Aorta (tissue), 5 donors: ENCODE measurements at regions of chr6 and their contacts with region 1.

Region 1: DNA sequence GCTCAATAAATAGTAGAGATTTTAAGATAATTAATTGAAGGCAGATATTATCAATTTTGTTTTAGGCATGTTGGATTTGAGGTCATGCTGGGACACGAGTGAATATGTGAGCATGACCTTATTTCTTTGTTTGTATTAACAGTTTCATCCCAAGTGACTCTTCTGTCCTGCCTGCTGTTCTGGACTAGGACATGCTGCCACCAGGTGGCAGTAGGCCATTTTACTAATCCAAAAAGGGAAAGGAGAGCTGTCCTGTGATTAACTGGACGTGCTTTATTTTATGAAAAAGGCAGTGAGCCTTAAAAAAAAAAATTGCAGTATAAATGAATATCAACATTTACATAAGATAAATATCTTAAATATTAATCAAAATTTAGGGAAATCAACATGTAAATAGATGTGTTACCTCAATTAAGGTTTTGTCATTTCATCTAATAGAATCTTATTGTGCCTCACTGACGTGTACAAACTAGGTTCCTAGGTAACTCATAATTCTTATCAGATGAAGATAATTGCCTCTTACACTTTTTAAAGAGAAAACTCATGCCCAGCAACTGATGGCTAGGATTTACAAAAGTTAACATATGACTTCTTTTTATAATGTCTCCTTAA is 49.8 kb downstream of the FRK start:
- DNase-seq: peak; percentile 79 to 85
- ATAC-seq: peak; percentile 81
- H3K4me3 ChIP-seq: no peak overlapping the region
- H3K27ac ChIP-seq: no peak overlapping the region
- H3K4me1 ChIP-seq: peaks cover 2 to 17% of the 10 kb centered on the region in 2 donors
- H3K27me3 ChIP-seq: no peaks in the 10 kb centered on the region

Region 2: GRCh38 chr6:115932481-115932880 is 78.4 kb before region 1 on chr6:
- intact Hi-C with region 1: loop called in 1 of 2 experiments (anchors 5 kb)
- DNase-seq: no peak
- ATAC-seq: no peak
- H3K4me3 ChIP-seq: no peak overlapping the region
- H3K27ac ChIP-seq: peak overlapping the region; percentile 88 to 99
- H3K4me1 ChIP-seq: peaks cover 0 to 3% of the 10 kb centered on the region in 2 donors
- H3K27me3 ChIP-seq: no peaks in the 10 kb centered on the region

Region 3: DNA sequence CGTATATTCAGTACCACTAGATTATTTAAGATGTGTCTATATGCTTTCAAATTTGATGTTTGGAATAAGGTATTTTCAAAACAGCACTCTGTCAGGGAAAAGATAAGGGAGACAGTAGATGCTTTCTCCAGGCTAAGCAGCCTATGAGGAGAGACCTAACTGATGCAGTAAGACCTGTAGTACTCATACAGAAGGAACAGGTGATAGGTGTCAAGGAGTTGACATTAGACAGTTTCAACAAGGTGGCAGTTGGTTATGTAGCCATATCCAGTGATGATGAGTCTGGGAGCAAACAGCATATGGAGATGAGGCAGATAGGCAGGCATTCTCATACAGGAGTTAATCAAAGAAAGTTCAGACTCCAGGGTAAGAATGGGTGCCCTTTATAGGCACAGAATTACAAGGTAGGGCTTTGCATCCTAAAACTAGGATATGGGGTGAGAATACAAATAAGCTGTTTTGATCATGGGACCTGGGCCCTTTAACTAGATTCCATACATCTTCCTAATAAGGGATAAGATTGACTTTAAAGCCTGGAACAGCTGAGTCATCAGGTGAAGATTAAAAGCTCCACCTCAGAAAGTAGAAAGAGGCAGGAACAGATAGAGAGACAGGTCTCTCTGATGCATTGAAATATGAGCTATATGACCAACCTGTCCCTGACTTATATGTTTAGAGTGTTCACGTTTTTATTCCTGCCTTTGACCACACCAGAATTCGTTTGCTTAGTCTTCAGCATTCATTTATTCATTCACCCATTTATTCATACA is 613.3 kb after region 1 on chr6:
- intact Hi-C with region 1: no loop called
- DNase-seq: no peak
- ATAC-seq: no peak
- H3K4me3 ChIP-seq: no peak overlapping the region
- H3K27ac ChIP-seq: no peak overlapping the region
- H3K4me1 ChIP-seq: no peaks in the 10 kb centered on the region
- H3K27me3 ChIP-seq: no peaks in the 10 kb centered on the region